Heart right ventricle (tissue), 16 donors: ENCODE measurements at regions of chr3 and their contacts with region 1.

Region 1: GRCh38 chr3:141368062-141368924 is at the start of gene ZBTB38:
- DNase-seq: peak; percentile 90 to 91
- ATAC-seq: peak; percentile 91 to 97 (median 96)
- H3K4me3 ChIP-seq: peak within 1 kb of the TSS; percentile 8 to 52 (median 42)
- H3K27ac ChIP-seq: peak within 1 kb of the TSS; percentile 86 to 96 (median 91)
- H3K4me1 ChIP-seq: peaks cover 7 to 61% (median 45%) of the 10 kb centered on the region in 9 donors
- H3K27me3 ChIP-seq: no peaks in the 10 kb centered on the region
- CTCF ChIP-seq: peak in 1 of 9 donors; percentile 5
- total RNA-seq, gene ZBTB38: 86.8 to 156 (median 139) TPM

Region 2: GRCh38 chr3:141311496-141312353 is 56.6 kb before region 1 on chr3:
- intact Hi-C with region 1: loop called in 2 of 10 experiments (anchors 2 to 5 kb)
- DNase-seq: peak; percentile 98 to 99
- ATAC-seq: peak; percentile 97 to 100 (median 99)
- H3K4me3 ChIP-seq: peak overlapping the region; percentile 42 to 79 (median 72)
- H3K27ac ChIP-seq: peak overlapping the region; percentile 19 to 89 (median 86)
- H3K4me1 ChIP-seq: peaks cover 4 to 26% (median 16%) of the 10 kb centered on the region in 9 donors
- H3K27me3 ChIP-seq: no peaks in the 10 kb centered on the region
- CTCF ChIP-seq: peak; percentile 57 to 93 (median 80)

Region 3: DNA sequence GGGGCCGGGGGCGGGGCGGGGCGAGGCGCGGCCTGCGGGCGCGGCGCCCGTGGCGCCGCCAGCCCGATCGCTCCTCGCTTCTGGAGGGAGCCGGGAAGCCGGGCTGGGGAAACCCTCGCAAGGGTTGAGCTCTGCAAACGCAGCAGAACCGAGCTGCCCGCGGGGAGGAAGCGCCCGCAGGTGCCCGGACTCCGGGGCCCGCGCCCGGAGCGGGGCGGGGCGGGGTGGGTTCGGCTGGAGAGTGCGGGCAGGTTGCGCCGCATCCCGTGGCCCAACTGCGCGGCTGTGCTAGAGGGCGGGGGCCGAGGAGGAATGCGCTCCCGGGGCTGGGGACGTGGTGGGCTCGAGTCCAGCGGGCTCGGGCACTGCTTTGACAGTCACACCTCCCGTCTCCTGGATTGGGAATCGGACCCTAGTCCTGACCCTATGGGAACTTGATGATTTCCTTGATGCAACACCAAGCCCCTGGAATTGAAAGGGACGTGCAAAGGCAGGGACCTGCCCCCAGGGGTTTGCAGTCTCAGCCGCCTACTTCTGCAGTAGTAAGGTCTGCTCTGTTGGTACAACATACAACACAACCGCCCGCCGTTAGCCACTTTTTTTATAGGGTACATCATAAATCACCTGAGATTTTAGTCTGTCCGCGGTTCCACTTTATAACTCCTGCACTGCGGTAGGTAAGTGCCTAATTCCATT is 34.3 kb after region 1 on chr3:
- intact Hi-C with region 1: loop called in 5 of 10 experiments (anchors 2 to 5 kb)
- DNase-seq: peak; percentile 80 to 81
- ATAC-seq: peak; percentile 77 to 90 (median 82)
- H3K4me3 ChIP-seq: peak overlapping the region; percentile 34 to 86 (median 76)
- H3K27ac ChIP-seq: peak overlapping the region; percentile 89 to 100 (median 99)
- H3K4me1 ChIP-seq: peaks cover 11 to 80% (median 71%) of the 10 kb centered on the region in 9 donors
- H3K27me3 ChIP-seq: no peaks in the 10 kb centered on the region
- CTCF ChIP-seq: peak in 4 of 9 donors; percentile 10 to 17 (median 13)

Region 4: DNA sequence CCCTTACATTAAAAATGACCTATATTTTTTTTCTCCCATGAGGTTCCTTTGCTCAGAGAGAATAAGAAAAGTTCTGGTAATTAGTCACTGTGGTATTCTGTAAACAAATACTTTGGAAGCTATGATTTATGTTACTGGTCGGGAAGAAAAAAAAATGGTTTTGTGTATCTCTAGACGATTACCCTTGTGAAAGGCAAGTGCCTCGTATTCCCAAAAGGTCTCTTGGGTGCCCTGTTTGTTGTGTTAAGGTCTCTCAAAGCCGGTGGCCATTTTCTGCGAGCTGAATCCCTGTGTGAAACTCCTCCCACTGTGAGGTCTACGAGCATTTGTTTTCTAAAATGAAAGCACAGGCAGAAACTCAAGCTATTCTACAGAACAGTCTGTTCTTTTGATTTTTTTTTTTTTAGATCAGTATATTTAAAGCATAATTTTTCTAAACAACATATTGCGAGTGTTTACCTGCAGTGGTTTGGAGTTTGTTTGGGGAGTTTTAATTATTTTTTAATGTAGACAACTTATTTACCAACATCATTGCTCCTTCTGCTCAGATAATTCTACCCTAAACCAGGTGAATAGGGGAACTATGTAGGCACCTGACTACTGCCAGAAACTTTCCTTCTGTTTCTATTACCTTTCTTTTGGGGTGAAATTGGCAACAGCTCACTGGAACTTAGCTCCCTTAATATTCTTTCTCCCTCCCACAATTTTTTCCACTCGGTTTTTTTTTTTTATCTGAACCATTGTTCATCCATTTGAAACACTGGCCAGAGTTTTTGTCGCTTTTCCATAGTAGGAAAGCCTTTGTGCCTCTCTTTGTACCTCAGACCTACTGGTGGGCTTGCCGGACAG is 44.0 kb after region 1 on chr3:
- intact Hi-C with region 1: loop called in 6 of 10 experiments (anchors 1 to 5 kb)
- DNase-seq: peak in 1 of 2 donors; percentile 75
- ATAC-seq: peak; percentile 19 to 81 (median 70)
- H3K4me3 ChIP-seq: peak overlapping the region in 9 of 10 donors; percentile 9 to 49 (median 40)
- H3K27ac ChIP-seq: peak overlapping the region; percentile 88 to 99 (median 96)
- H3K4me1 ChIP-seq: peaks cover 17 to 99% (median 95%) of the 10 kb centered on the region in 9 donors
- H3K27me3 ChIP-seq: no peaks in the 10 kb centered on the region
- CTCF ChIP-seq: no peak

Region 5: GRCh38 chr3:141441381-141442364 is 73.4 kb after region 1 on chr3:
- intact Hi-C with region 1: loop called in 6 of 10 experiments (anchors 2 to 5 kb)
- DNase-seq: peak; percentile 62 to 76
- ATAC-seq: peak; percentile 47 to 91 (median 84)
- H3K4me3 ChIP-seq: peak overlapping the region in 3 of 10 donors; percentile 2 to 23 (median 5)
- H3K27ac ChIP-seq: peak overlapping the region; percentile 75 to 92 (median 84)
- H3K4me1 ChIP-seq: peaks cover 11 to 92% (median 73%) of the 10 kb centered on the region in 9 donors
- H3K27me3 ChIP-seq: no peaks in the 10 kb centered on the region
- CTCF ChIP-seq: peak; percentile 54 to 90 (median 85)

Region 6: DNA sequence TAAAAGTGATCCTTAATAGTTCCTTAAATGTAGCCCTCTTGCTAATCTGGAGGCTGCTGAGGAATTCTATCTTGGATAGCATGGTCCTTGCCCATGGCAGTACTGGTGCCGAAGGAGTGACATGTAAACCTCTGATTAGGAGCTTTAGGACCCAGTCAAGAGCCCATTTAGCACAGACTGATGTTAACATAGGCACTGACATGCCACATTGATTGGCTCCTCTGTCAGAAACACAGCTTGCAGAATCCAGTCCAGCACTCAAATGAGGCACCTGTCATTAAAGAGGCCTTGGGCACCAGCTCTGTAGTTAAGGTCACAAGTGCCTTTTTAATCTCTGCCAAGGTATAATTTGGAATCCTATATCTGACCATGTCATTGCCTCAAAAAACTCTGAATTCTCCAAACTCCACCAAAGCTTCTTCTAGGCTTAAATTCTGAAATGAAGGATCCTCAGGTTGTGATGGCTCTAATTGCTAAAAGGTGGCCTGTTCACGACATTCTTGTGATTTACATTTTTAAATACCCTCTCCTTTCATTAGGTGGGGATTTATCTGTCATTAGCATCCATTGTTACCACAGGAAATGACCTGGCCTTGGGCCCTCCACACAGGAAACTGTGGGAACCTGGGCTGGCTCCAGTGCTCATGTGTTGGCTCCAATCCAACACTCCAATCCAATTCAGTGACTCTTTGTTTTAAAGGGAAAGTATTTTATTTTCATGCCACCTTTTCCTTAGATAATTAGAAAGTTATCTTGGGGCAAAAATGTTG is 312.5 kb after region 1 on chr3:
- intact Hi-C with region 1: no loop called
- DNase-seq: peak; percentile 29 to 62
- ATAC-seq: peak in 7 of 8 donors; percentile 44 to 94 (median 67)
- H3K4me3 ChIP-seq: no peak overlapping the region
- H3K27ac ChIP-seq: peak overlapping the region in 8 of 10 donors; percentile 9 to 66 (median 47)
- H3K4me1 ChIP-seq: peaks cover 0 to 45% (median 17%) of the 10 kb centered on the region in 9 donors
- H3K27me3 ChIP-seq: no peaks in the 10 kb centered on the region
- CTCF ChIP-seq: no peak